GM12878 (cell line): ENCODE measurements at regions of chr1 and their contacts with region 1.

Region 1: DNA sequence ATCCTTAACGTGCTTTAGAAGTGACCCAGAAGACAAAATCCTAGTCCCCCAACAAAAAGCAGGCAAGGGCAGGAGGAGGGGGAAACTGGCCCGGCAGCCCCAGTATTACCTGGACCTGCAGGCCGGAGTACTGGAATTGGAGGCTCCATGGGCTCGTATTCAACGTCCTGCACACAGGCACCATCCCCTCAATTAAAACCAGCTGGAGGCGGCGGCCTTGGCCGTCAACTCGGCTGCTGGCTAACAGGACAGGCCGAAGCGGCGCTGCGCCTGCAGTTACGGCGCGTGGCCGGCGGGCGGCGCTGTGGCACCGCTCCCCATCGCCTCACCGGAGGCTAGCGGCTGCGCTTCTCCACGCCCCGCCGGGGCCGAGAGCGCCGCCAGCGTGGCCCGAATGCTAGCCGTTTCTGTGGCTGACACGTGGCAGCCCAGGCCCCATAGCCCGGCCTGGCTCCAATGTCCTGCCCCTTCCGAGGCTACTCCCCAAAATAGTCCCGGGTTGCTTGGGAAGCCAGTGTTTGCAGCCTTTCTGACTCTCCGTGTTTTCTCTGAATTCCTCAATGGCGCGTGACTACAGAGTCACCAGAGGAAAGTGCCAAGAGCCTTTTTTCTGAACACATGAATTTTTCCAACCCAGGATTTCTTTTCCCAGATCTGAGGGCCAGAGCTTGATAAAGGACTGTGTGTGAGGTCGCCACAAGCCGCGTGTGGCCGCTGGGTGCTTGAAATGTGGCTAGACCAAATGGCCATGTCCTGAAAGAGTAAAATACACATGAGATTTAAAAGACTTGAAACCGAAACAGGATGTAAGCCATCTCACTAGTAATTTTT is 82.5 kb downstream of the HHIPL2 start:
- DNase-seq: peak; percentile 57
- ATAC-seq: peak; percentile 98
- H3K4me3 ChIP-seq: peak overlapping the region; percentile 68; the same call in 1 of the 2 replicates
- H3K27ac ChIP-seq: peak overlapping the region; percentile 62
- H3K4me1 ChIP-seq: no peaks in the 10 kb centered on the region
- H3K27me3 ChIP-seq: peaks cover 2 to 5% of the 10 kb centered on the region in 2 experiments; a peak in 2 of 4 replicates
- CTCF ChIP-seq: peak; percentile 96 to 99 (median 96)
- EP300 ChIP-seq: no peak
- POLR2A ChIP-seq: peak; percentile 47; the same call in 1 of the 2 replicates
- RAD21 ChIP-seq: peak; percentile 73

Region 2: GRCh38 chr1:222634180-222635013 is 169.0 kb after region 1 on chr1:
- CTCF ChIA-PET with region 1: interaction called, 119 read pairs
- POLR2A ChIA-PET with region 1: interaction called, 5 read pairs
- RAD21 ChIA-PET with region 1: interaction called, 50 read pairs
- SMC1A ChIA-PET with region 1: interaction called, 37 read pairs
- in situ Hi-C with region 1: loop called (anchors 5 kb)
- intact Hi-C with region 1: loop called (anchors 1 kb)
- DNase-seq: no peak
- ATAC-seq: peak; percentile 95
- H3K4me3 ChIP-seq: no peak overlapping the region
- H3K27ac ChIP-seq: no peak overlapping the region
- H3K4me1 ChIP-seq: no peaks in the 10 kb centered on the region
- H3K27me3 ChIP-seq: no peaks in the 10 kb centered on the region
- CTCF ChIP-seq: peak; percentile 77 to 90 (median 85)
- EP300 ChIP-seq: no peak
- POLR2A ChIP-seq: no peak
- RAD21 ChIP-seq: peak; percentile 90

Region 3: GRCh38 chr1:222713091-222713961 is 247.9 kb after region 1 on chr1:
- CTCF ChIA-PET with region 1: interaction called, 5 read pairs
- POLR2A ChIA-PET with region 1: interaction called, 4 read pairs
- RAD21 ChIA-PET with region 1: interaction called, 5 read pairs
- SMC1A ChIA-PET with region 1: no interaction called
- in situ Hi-C with region 1: loop called (anchors 10 kb)
- intact Hi-C with region 1: loop called (anchors 5 kb)
- DNase-seq: peak; percentile 88
- ATAC-seq: peak; percentile 86
- H3K4me3 ChIP-seq: peak overlapping the region; percentile 81
- H3K27ac ChIP-seq: peak overlapping the region; percentile 98
- H3K4me1 ChIP-seq: no peaks in the 10 kb centered on the region
- H3K27me3 ChIP-seq: no peaks in the 10 kb centered on the region
- CTCF ChIP-seq: no peak
- EP300 ChIP-seq: peak in 1 of 2 experiments; percentile 31; a peak in 1 of 4 replicates
- POLR2A ChIP-seq: peak; percentile 70
- RAD21 ChIP-seq: peak; percentile 16; the same call in 1 of the 2 replicates

Region 4: DNA sequence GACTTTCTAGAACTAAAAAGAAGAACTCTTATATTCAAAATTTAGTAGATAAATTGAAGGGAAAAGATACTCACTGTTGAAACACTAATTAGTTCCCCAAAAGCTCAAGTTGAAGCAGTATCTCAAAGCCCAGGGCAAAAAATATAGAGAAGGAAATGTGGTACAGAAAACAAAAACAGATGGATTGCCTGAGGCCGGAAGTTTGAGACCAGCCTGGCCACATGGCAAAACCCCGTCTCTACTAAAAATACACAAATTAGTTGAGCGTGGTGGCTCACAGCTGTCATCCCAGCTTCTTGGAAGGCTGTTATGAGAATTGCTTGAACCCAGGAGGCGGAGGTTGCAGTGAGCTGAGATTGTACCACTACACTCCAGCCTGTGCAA is 307.6 kb after region 1 on chr1:
- CTCF ChIA-PET with region 1: no interaction called
- POLR2A ChIA-PET with region 1: no interaction called
- RAD21 ChIA-PET with region 1: interaction called, 3 read pairs
- SMC1A ChIA-PET with region 1: no interaction called
- in situ Hi-C with region 1: no loop called
- intact Hi-C with region 1: loop called (anchors 2 kb)
- DNase-seq: peak; percentile 73
- ATAC-seq: peak; percentile 87
- H3K4me3 ChIP-seq: 0 out of 2 replicates have a peak overlapping the region, but pooled peaks have one; percentile 17
- H3K27ac ChIP-seq: 0 out of 2 replicates have a peak overlapping the region, but pooled peaks have one; percentile 25
- H3K4me1 ChIP-seq: peaks cover 14% of the 10 kb centered on the region
- H3K27me3 ChIP-seq: no peaks in the 10 kb centered on the region
- CTCF ChIP-seq: no peak
- EP300 ChIP-seq: 0 out of 4 replicates have a peak, but pooled peaks of 1 of the 2 experiments have one; percentile 15
- POLR2A ChIP-seq: no peak
- RAD21 ChIP-seq: no peak

Region 5: DNA sequence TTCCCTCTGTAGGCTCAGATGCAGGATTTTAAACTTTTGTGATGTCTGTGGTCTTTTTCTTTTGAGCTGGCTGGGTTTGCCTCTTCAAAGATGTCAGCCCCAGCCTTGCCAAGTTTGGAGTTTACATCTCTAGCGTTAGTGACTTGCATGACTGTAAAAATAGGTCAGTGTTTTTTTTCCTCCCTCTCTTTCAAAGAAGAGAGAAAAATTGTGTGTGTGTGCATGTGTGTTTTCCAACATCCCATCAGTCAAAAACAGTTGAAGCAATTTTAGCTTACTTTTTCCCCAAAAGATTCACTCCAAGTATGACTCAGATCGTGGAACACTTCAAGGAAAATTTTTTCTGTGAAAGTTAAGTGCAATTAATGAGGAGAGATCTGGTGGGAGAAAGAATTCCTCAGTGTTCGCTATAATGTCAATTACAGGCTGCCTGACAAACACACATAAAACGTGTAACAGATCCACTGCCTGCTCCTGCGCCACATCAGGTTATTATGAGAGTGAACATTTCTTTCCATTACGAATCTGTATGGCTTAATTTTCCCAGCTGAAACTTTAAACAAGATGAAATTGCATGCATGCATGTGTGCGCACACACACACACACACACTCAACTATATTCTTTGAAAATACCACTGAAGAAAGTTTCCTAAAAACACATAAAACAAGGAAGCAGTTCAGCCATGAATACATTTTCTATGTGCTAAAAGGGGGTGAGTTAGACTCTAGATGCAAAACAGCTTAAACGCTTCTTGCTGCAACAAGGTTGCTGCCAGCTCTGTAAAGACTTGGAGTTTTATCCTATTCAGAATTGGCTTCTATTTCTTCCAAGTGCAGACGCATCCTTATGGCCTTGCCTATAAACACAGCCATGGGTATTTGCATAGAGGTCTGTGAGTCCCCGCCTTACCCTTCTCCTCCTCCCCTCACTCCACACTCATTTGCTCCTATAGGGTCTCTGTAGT is 622.1 kb after region 1 on chr1:
- CTCF ChIA-PET with region 1: interaction called, 12 read pairs
- POLR2A ChIA-PET with region 1: no interaction called
- RAD21 ChIA-PET with region 1: interaction called, 7 read pairs
- SMC1A ChIA-PET with region 1: no interaction called
- in situ Hi-C with region 1: loop called (anchors 5 kb)
- intact Hi-C with region 1: no loop called
- DNase-seq: no peak
- ATAC-seq: no peak
- H3K4me3 ChIP-seq: no peak overlapping the region
- H3K27ac ChIP-seq: no peak overlapping the region
- H3K4me1 ChIP-seq: no peaks in the 10 kb centered on the region
- H3K27me3 ChIP-seq: no peaks in the 10 kb centered on the region; a peak in 2 of 4 replicates
- CTCF ChIP-seq: no peak
- EP300 ChIP-seq: no peak
- POLR2A ChIP-seq: no peak
- RAD21 ChIP-seq: no peak